Calu3 (cell line): ENCODE measurements at regions of chr5 and their contacts with region 1.

Region 1: DNA sequence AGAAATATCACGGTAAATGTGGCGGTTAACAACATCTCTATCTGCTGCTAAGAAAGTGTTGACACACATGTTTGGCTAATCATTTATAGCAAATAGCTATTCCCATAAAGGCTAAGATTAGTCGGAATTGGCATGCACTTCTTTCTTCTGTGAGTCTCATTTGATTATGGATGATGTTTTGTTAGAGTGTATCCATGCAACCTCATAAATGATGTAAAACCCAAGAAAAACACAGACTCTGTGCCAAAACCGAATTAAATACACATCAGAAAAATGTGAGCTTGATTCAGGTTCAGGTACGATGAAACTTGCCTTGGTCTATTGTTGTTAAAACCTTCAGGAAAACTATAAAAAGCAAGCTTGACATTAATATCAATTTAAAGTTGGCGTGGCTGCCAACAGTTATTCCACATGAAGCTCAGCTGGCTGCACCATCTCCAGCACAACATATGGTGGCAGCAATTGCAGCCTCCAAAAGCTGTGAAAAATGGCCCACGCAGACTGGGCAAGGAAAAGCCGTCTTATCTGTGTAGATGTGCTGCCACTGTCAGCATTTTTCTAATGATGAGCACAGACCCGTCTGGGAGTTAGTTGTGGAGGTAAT is 41.1 kb upstream of the ICE1 start:
- DNase-seq: no peak
- H3K4me3 Mint-ChIP-seq: no peak overlapping the region
- H3K27ac Mint-ChIP-seq: no peak overlapping the region
- H3K4me1 Mint-ChIP-seq: no peaks in the 10 kb centered on the region
- H3K27me3 Mint-ChIP-seq: peaks cover 12% of the 10 kb centered on the region
- CTCF ChIP-seq: no peak

Region 2: GRCh38 chr5:5340206-5340729 is 41.1 kb before region 1 on chr5:
- CTCF ChIA-PET with region 1: no interaction called
- intact Hi-C with region 1: loop called (anchors 1 kb)
- DNase-seq: no peak
- H3K4me3 Mint-ChIP-seq: no peak overlapping the region
- H3K27ac Mint-ChIP-seq: no peak overlapping the region
- H3K4me1 Mint-ChIP-seq: no peaks in the 10 kb centered on the region
- H3K27me3 Mint-ChIP-seq: no peaks in the 10 kb centered on the region
- CTCF ChIP-seq: no peak